ENCODE measurements at regions of chr4 and their contacts with region 1.

Region 1: GRCh38 chr4:17366496-17366895 is 145.4 kb downstream of the QDPR start:
- DNase-seq: no peak
- ATAC-seq: no peak
- H3K4me3 ChIP-seq: no peak overlapping the region
- H3K4me3 Mint-ChIP-seq: no peak overlapping the region
- H3K27ac ChIP-seq: no peak overlapping the region
- H3K27ac Mint-ChIP-seq: no peak overlapping the region
- H3K4me1 ChIP-seq: no peaks in the 10 kb centered on the region
- H3K4me1 Mint-ChIP-seq: peaks cover 9 to 12% (median 9%) of the 10 kb centered on the region in 3 donors
- H3K27me3 ChIP-seq: no peaks in the 10 kb centered on the region
- H3K27me3 Mint-ChIP-seq: peaks cover 8 to 14% of the 10 kb centered on the region in 2 donors

Region 2: GRCh38 chr4:17380347-17380746 is 13.9 kb after region 1 on chr4:
- CTCF ChIA-PET with region 1: no interaction called
- POLR2A ChIA-PET with region 1: no interaction called
- DNase-seq: no peak
- ATAC-seq: no peak
- H3K4me3 ChIP-seq: no peak overlapping the region
- H3K4me3 Mint-ChIP-seq: no peak overlapping the region
- H3K27ac ChIP-seq: no peak overlapping the region
- H3K27ac Mint-ChIP-seq: no peak overlapping the region
- H3K4me1 ChIP-seq: peaks cover 0 to 1% of the 10 kb centered on the region in 2 experiments
- H3K4me1 Mint-ChIP-seq: peaks cover 9 to 13% (median 12%) of the 10 kb centered on the region in 3 donors
- H3K27me3 ChIP-seq: no peaks in the 10 kb centered on the region
- H3K27me3 Mint-ChIP-seq: no peaks in the 10 kb centered on the region

Region 3: DNA sequence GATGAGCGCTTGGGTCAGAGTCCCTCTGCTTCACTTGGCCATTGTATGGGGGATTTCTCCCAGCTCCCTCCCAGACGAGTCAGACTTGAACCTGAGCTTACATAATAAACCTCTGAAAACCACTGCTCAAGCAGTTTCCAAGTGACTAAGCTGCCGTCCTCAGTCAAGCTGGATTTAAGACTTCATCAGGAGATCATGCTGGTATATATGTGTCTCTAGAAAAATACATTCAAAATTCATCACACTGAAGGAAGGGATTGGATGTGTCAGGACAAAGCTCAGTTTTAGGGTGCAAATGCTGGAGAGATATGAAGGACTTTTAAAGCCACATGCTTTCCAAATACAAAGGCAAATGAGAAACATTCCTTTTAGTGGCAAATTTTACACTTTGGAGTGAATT is 31.1 kb after region 1 on chr4:
- CTCF ChIA-PET with region 1: no interaction called
- POLR2A ChIA-PET with region 1: interaction called in 1 of 2 experiments, 14 read pairs
- DNase-seq: no peak
- ATAC-seq: no peak
- H3K4me3 ChIP-seq: no peak overlapping the region
- H3K4me3 Mint-ChIP-seq: no peak overlapping the region
- H3K27ac ChIP-seq: no peak overlapping the region
- H3K27ac Mint-ChIP-seq: no peak overlapping the region
- H3K4me1 ChIP-seq: no peaks in the 10 kb centered on the region
- H3K4me1 Mint-ChIP-seq: no peaks in the 10 kb centered on the region
- H3K27me3 ChIP-seq: no peaks in the 10 kb centered on the region
- H3K27me3 Mint-ChIP-seq: peaks cover 0 to 3% of the 10 kb centered on the region in 2 donors